MCF 10A (cell line): ENCODE measurements at regions of chr2 and their contacts with region 1.

Region 1: GRCh38 chr2:61176755-61177726 is 15.1 kb downstream of the C2orf74 start:
- DNase-seq: peak; percentile 93
- H3K4me3 Mint-ChIP-seq: peak overlapping the region; percentile 81
- H3K27ac Mint-ChIP-seq: peak overlapping the region; percentile 91
- H3K4me1 Mint-ChIP-seq: peaks cover 45% of the 10 kb centered on the region
- H3K27me3 Mint-ChIP-seq: no peaks in the 10 kb centered on the region
- CTCF ChIP-seq: no peak

Region 2: GRCh38 chr2:61144697-61145268 is 32.3 kb before region 1 on chr2:
- CTCF ChIA-PET with region 1: interaction called, 3 read pairs
- POLR2A ChIA-PET with region 1: interaction called, 56 read pairs
- intact Hi-C with region 1: no loop called
- DNase-seq: peak; percentile 98
- H3K4me3 Mint-ChIP-seq: peak overlapping the region; percentile 78
- H3K27ac Mint-ChIP-seq: peak overlapping the region; percentile 84
- H3K4me1 Mint-ChIP-seq: no peaks in the 10 kb centered on the region
- H3K27me3 Mint-ChIP-seq: no peaks in the 10 kb centered on the region
- CTCF ChIP-seq: no peak

Region 3: DNA sequence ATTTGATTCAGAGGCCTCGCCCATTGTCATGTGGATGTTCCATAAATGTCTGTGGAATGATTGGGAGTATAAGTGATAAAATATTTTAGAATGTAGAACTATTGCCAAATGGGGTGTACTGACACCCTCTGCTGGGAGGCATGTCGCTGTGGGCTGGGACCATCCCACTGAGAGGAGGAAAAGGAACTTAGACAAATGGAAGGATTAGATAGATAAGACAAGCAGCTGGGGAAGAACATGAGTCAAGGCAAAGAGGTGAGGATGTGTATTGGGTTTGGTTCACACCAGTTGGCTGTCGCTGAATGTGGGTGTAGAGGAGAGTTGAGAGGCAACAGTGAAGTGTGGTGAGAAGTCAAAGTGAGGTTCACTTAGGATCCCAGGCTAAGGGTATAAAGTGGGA is 11.1 kb before region 1 on chr2:
- CTCF ChIA-PET with region 1: no interaction called
- POLR2A ChIA-PET with region 1: interaction called, 18 read pairs
- intact Hi-C with region 1: no loop called
- DNase-seq: no peak
- H3K4me3 Mint-ChIP-seq: no peak overlapping the region
- H3K27ac Mint-ChIP-seq: no peak overlapping the region
- H3K4me1 Mint-ChIP-seq: no peaks in the 10 kb centered on the region
- H3K27me3 Mint-ChIP-seq: no peaks in the 10 kb centered on the region
- CTCF ChIP-seq: no peak